Right lobe of liver (tissue), 6 donors: ENCODE measurements at regions of chr2 and their contacts with region 1.

Region 1: DNA sequence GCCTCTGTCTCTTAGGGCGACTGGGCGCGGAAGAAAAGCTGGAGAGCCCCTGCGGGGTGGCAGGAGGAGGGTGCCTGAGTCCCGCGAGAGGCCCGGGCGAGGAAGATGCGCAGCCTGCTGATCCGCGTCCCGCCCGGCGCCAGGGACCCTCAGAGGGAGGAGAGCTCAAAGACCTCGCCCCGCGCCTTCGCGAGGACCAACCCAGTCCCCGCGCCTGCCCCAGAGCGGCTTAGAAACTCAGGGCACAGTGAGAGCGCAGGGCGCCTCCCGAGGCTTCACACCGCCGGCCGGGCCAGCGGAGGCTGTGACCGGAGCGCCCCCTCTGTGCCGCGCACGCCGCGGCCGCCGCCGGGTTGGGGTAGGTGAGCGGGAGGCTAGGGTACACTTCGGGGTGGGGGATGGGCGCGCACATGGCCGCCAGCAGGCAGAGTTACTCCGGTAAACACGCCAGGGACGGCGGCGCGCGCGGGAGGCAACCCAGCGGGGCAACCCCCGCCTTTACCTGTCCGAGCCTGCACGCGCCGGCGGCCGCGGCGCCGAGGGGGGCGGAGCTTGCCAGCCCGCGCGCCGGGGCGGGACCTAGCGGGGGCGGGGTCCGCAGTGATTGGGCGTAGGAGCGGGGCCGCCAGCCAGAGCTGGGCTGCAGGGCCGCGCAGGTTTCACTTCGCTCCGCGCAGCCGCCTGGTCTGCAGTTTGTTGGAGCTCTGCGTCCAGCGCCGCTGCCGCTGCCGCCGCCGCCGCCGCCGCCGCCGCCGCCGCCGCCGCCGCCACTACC is at the start of gene BCL2L11:
- DNase-seq: peak; percentile 96 to 97 (median 97)
- ATAC-seq: peak; percentile 66 to 82 (median 74)
- H3K4me3 ChIP-seq: peak within 1 kb of the TSS; percentile 71 to 78 (median 76)
- H3K27ac ChIP-seq: peak within 1 kb of the TSS; percentile 74 to 95 (median 90)
- H3K4me1 ChIP-seq: peaks cover 0 to 24% (median 5%) of the 10 kb centered on the region in 4 donors
- H3K27me3 ChIP-seq: peaks cover 0 to 16% of the 10 kb centered on the region in 2 donors
- CTCF ChIP-seq: peak in 2 of 4 donors; percentile 11 to 19
- POLR2A ChIP-seq: peak; percentile 98
- total RNA-seq, gene BCL2L11: 6.5 to 13.0 (median 8.8) TPM

Region 2: GRCh38 chr2:111071600-111072171 is 48.8 kb before region 1 on chr2:
- intact Hi-C with region 1: no loop called
- DNase-seq: no peak
- ATAC-seq: peak in 2 of 4 donors; percentile 7 to 63
- H3K4me3 ChIP-seq: no peak overlapping the region
- H3K27ac ChIP-seq: no peak overlapping the region
- H3K4me1 ChIP-seq: no peaks in the 10 kb centered on the region
- H3K27me3 ChIP-seq: no peaks in the 10 kb centered on the region
- CTCF ChIP-seq: no peak
- POLR2A ChIP-seq: no peak

Region 3: DNA sequence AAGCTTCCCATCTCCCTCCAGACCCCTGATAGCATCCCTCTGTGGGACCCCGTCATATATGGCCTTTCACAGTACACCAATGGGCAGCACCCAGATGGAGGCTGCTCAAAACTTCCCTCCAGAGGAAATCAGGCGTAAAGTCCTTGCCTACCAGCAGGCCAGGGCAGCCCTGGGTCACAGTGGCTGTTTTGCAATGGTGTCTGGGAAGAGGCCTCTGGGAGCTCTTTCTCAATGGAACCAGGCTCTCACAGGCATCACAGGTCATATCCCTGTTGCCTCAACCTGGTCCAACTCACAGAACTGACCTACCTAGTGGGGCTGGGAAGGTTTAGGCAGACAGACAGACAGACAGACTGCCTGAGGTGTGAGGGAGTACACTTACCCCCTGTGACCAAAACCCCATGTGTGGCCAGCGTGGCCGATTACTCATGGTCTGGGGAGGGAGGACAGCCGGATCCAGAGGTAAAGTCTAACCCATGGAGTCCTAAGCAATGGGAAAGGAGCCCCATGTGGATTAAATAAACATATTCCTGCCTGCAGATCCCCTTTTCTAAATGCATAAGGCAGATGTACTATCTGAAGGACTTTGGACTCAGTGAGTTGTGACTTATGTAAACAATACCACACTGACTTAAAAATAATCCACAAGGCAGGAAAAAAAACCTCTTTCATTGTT is 58.4 kb after region 1 on chr2:
- intact Hi-C with region 1: loop called in 1 of 2 experiments (anchors 10 kb)
- DNase-seq: peak; percentile 72 to 91 (median 85)
- ATAC-seq: peak; percentile 67 to 81 (median 76)
- H3K4me3 ChIP-seq: no peak overlapping the region
- H3K27ac ChIP-seq: peak overlapping the region; percentile 6 to 57 (median 56)
- H3K4me1 ChIP-seq: peaks cover 0 to 41% (median 16%) of the 10 kb centered on the region in 4 donors
- H3K27me3 ChIP-seq: no peaks in the 10 kb centered on the region
- CTCF ChIP-seq: no peak
- POLR2A ChIP-seq: no peak